Sciatic nerve (tissue), 2 donors: ENCODE measurements at regions of chr17 and their contacts with region 1.

Region 1: GRCh38 chr17:56489980-56490379 is 103.5 kb upstream of the NOG start:
- DNase-seq: no peak
- ATAC-seq: no peak

Region 2: GRCh38 chr17:56373981-56374833 is 115.8 kb before region 1 on chr17:
- intact Hi-C with region 1: no loop called
- DNase-seq: no peak
- ATAC-seq: no peak

Region 3: DNA sequence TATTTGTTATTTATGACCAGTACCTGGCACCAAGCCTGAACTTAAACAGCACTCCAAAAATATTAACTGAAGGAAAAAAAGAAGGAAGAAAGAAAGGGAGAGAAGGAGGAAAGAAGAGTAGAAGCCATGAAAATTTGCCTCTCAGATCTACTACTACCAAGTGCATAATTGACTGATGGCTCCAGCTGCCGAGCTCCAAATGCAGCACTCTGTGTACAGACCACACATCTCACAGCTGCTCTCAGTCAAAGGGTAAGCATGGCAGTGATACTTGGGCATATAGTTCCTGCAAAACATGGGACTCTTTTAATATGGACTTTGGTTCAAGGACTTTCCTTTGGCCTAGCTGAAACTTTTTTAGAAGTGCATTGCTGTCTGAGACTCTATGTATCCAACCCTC is 59.5 kb after region 1 on chr17:
- intact Hi-C with region 1: no loop called
- DNase-seq: no peak
- ATAC-seq: no peak

Region 4: GRCh38 chr17:56723421-56723820 is 233.4 kb after region 1 on chr17:
- intact Hi-C with region 1: loop called (anchors 2 kb)
- DNase-seq: no peak
- ATAC-seq: no peak